ENCODE measurements at regions of chr17 and their contacts with region 1.

Region 1: GRCh38 chr17:58432806-58433572 is 15.7 kb upstream of the RNF43 start:
- H3K4me3 ChIP-seq: no peak overlapping the region
- H3K27ac ChIP-seq: no peak overlapping the region
- H3K4me1 ChIP-seq: no peaks in the 10 kb centered on the region
- CTCF ChIP-seq: no peak

Region 2: DNA sequence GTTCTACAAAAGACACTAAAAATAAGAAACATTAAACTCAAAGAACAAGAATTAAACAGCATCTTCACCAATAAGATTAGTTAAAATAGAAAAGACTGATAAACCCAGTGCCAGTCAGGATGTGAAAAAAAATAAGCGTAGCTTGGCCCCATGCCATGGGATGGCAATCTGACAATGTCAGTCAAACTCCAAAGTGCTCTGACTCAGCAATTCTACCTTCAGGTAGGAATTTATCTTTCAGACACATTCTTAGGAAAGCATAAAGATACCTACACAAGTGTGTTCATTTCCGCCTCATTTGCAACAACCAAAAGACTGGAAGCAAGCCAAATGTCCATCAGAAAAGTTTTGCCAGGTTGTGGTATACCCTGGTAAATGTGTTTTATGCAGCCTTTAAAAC is 143.1 kb before region 1 on chr17:
- CTCF ChIA-PET with region 1: no interaction called
- POLR2A ChIA-PET with region 1: no interaction called
- H3K4me3 ChIP-seq: no peak overlapping the region
- H3K27ac ChIP-seq: no peak overlapping the region
- H3K4me1 ChIP-seq: peaks cover 7% of the 10 kb centered on the region; the same call in 1 of the 2 replicates
- CTCF ChIP-seq: no peak

Region 3: DNA sequence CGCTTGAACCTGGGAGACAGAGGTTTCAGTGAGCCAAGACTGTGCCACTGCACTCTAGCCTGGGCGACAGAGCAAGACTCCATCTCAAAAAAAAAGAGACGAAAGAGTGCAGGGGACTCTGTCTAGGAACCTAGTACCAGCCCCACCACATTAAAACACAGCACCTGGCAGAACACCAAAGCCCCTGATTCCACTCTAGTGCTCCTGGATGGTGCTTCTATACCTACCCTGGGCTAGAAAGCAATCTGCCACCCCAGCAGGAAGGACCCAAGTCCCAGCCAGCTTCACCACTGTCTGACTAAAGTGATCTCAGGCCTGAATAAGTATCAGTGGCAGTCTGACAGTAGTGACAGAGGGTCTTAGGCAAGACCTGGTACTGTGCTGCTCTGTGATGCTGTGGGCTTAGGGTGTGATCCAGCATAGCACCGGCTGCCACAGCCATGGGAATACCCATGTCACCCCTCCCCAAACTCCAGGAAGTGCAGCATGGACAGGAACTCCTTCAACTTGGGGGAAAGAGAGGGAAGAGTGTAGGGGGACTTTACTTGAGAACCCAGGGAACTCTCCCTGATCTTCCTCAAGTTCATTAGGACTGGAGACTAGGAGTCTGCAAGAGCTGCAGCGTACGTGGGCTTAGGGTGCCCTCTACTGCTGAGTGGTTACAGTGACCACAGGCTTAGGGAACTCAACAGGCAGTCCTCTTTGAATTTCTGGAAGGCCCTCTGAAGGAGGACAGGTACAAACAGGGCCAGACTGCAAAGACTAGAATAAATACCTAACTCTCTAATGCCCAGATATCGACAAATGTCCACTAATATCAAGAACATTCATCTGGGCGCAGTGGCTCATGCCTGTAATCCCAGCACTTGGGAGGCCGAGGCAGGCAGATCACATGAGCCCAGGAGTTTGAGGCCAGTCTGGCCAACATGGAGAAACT is 14.3 kb after region 1 on chr17:
- CTCF ChIA-PET with region 1: interaction called, 16 read pairs
- POLR2A ChIA-PET with region 1: no interaction called
- H3K4me3 ChIP-seq: no peak overlapping the region
- H3K27ac ChIP-seq: no peak overlapping the region
- H3K4me1 ChIP-seq: no peaks in the 10 kb centered on the region
- CTCF ChIP-seq: peak; percentile 93

Measured in HEK293 (cell line).